Heart left ventricle (tissue), 16 donors: ENCODE measurements at regions of chr16 and their contacts with region 1.

Region 1: DNA sequence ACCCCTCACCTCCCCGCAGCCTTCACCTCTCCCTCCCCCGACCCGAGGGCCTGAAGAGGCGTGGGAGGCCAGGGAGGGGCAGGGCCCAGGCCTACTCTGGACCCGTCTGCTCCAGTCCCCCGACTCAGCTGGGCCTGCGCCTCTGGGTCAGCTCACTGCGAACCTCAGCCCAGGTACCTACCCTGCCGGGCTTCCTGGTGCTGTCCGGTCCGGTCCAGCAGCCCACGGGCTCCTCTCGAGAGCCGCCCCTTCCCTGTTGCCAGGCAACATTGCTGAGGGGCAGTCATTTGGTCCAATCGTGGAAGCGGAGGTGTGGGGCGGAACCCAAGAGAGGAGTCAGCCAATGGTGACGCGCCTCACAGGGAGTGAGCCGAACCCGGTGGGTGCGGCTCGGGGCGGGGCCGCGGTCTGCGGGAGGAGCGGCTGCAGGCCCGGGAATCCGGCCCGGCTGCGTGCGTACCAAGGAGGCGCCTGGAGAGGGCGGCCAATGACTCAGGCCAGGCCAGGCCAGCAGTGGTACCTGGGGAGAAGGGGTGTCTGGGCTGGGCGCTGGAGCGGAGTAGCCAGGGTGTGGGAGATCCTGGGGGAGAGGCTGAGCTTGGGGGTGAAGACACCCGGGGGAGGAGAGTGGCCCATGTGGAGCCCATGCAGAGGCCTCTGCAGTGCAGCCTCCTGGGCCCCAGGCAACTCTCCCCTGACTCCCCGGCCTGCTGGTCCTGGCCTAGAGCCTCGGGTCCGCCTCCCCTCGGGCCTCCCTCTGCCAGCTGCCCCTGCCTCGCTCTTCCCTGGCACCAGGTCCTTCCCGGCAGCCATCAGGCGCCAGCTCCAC is at the start of gene MEAK7:
- DNase-seq: peak; percentile 99
- ATAC-seq: peak; percentile 97 to 99 (median 98)
- H3K4me3 ChIP-seq: peak within 1 kb of the TSS; percentile 24 to 98 (median 80)
- H3K27ac ChIP-seq: peak within 1 kb of the TSS in 11 of 12 donors; percentile 36 to 91 (median 82)
- H3K4me1 ChIP-seq: peaks cover 3 to 32% (median 18%) of the 10 kb centered on the region in 12 donors
- H3K27me3 ChIP-seq: no peaks in the 10 kb centered on the region
- CTCF ChIP-seq: peak in 2 of 12 donors; percentile 23 to 24
- POLR2A ChIP-seq: peak; percentile 59 to 76
- total RNA-seq, gene MEAK7: 4.0 to 13.2 (median 5.5) TPM

Region 2: GRCh38 chr16:84434800-84435199 is 69.8 kb before region 1 on chr16:
- intact Hi-C with region 1: no loop called
- DNase-seq: no peak
- ATAC-seq: no peak
- H3K4me3 ChIP-seq: no peak overlapping the region
- H3K27ac ChIP-seq: no peak overlapping the region
- H3K4me1 ChIP-seq: no peaks in the 10 kb centered on the region
- H3K27me3 ChIP-seq: peaks cover 0 to 4% (median 0%) of the 10 kb centered on the region in 9 donors
- CTCF ChIP-seq: no peak
- POLR2A ChIP-seq: no peak

Region 3: DNA sequence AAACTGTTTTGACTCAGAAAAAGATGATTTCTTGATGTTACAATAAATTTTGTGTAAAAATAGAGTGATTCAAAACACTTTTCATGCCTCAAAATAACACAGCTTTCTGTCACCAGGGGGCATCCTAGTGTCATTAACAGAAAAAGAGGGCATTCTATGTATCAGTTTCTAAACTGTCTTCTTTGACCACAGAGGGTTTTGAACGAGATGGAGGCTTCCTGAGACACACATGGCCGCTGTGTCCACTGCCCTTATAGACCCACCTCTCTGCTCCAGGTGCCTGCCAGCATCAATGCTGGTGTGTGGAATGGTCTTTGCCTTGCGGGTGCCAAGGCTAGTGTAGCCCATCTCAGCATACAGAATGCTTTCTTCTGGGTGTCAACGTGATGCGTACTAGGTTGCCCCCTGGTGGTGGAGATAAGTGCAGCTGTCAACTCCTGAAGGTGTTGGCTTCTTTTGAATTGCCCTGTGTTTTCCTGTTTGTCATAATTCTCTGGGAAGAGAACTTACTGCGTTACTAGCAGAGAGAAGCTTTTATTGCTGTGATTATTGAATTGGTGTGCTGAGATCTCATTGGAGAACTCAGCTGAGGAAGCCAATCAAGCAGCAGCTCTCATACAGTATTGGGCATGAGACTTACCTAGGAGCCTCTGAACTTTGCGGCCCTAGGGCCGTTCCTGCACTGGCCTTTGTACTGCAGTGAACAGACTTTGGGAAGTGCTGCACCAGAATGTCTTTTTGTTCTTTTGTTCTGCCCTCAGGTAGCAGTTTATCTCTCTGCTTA is 233.8 kb after region 1 on chr16:
- intact Hi-C with region 1: loop called in 1 of 10 experiments (anchors 5 kb)
- DNase-seq: peak; percentile 67 to 81 (median 76)
- ATAC-seq: peak; percentile 44 to 71 (median 66)
- H3K4me3 ChIP-seq: peak overlapping the region in 1 of 12 donors; percentile 4
- H3K27ac ChIP-seq: peak overlapping the region in 3 of 12 donors; percentile 30 to 45 (median 31)
- H3K4me1 ChIP-seq: peaks cover 0 to 76% (median 37%) of the 10 kb centered on the region in 12 donors
- H3K27me3 ChIP-seq: no peaks in the 10 kb centered on the region
- CTCF ChIP-seq: peak; percentile 81 to 96 (median 88)
- POLR2A ChIP-seq: no peak